ENCODE measurements at regions of chr1 and their contacts with region 1.

Region 1: DNA sequence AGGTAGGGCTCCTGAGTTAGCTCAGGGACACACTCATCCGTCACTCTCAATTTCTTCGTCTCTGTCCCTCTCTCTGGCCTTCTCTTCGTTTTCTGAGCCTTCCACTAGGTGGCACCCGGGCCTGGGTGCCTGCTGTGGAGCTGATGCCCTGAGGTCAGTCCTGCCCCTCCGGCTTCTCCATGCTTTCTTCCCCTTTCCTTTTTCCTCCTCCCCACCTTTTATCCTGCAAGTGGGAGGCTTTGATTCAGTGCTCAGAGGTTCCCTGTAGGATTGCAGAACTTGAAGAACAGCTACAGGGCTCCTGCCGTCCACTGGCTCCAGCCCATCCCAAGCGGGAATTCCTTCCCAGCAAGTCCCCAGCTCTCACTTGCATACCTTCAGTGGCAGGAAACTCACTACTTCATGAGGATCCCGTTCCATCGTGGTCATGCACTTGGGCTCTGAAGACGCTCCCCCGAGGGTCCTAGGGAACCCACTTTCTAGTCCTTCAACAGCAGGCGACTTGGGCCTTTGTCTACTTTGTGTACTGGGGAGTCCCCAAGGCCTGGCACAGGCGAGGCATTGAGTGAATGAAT is 45.6 kb downstream of the SRRM1 start:
- DNase-seq: peak; percentile 72
- ATAC-seq: peak; percentile 87
- H3K4me3 Mint-ChIP-seq: no peak overlapping the region
- H3K27ac Mint-ChIP-seq: no peak overlapping the region
- H3K4me1 Mint-ChIP-seq: no peaks in the 10 kb centered on the region
- H3K27me3 Mint-ChIP-seq: no peaks in the 10 kb centered on the region
- CTCF ChIP-seq: peak; percentile 83

Region 2: DNA sequence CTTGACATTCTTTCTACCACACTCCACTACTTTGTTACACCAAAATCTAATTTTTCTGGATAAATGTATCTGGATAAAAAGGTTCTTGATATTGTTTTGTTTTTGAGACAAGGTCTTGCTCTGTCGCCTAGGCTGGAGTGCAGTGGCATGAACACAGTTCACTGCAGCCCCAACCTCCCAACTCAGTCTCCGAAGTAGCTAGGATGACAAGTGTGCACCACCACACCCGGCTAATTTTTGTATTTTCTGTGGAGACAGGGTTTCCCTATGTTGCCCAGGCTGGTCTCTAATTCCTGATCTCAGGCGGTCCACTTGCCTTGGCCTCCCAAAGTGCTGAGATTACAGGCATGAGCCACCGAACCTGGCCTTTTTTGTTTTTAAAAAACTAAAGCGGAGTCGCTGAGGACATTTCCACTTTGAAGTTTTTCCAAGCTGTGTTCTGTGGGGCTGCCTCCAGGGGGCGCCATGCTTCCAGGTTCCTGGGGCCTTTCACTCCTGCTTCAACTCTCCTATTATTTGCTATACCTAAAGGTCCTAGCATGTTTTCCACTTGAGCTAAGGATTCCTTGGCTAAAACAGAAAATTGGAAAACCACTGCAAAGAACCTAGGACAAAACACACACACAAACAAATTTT is 146.9 kb before region 1 on chr1:
- CTCF ChIA-PET with region 1: no interaction called
- POLR2A ChIA-PET with region 1: no interaction called
- intact Hi-C with region 1: no loop called
- DNase-seq: peak; percentile 45
- ATAC-seq: no peak
- H3K4me3 Mint-ChIP-seq: no peak overlapping the region
- H3K27ac Mint-ChIP-seq: peak overlapping the region; percentile 84
- H3K4me1 Mint-ChIP-seq: peaks cover 60% of the 10 kb centered on the region
- H3K27me3 Mint-ChIP-seq: no peaks in the 10 kb centered on the region
- CTCF ChIP-seq: peak; percentile 83

Region 3: DNA sequence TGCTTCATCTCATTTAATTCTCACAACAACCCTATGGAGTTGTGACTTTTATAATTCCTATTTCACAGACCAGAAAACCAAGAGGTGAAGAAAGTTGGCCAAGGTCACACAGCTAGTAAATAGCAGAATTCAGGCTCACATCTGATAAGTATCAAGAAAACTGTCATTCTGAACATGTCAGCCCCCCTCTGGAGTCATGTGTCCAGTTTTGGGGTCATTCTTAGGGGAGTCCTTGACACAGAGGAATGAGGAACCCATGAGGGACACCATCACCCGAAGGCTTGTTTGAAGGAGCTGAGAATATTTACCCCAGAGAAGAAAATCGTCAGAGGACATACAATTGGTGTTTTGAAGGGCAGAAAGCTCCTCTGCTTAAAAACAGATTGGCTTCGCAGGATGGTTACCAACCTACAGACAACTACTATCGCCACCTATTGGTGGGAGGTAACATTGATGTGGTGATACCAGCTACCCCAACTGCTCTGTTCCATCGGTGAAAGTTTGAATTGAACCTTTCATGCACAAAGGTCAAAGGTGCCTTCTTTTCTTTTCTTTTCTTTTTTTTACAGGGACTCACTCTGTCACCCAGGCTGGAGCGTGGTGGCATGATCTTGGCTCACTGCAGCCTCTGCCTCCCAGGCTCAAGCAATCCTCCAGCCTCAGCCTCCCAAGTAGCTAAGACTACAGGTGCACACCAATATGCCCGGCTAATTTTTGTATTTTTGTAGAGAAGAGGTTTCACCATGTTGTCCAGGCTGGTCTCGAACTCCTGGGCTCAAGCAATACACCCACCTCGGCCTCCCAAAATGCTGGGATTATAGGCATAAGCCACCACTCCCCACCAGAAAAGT is 101.5 kb before region 1 on chr1:
- CTCF ChIA-PET with region 1: no interaction called
- POLR2A ChIA-PET with region 1: no interaction called
- intact Hi-C with region 1: no loop called
- DNase-seq: peak; percentile 70
- ATAC-seq: peak; percentile 98
- H3K4me3 Mint-ChIP-seq: no peak overlapping the region
- H3K27ac Mint-ChIP-seq: peak overlapping the region; percentile 78
- H3K4me1 Mint-ChIP-seq: peaks cover 8% of the 10 kb centered on the region
- H3K27me3 Mint-ChIP-seq: no peaks in the 10 kb centered on the region
- CTCF ChIP-seq: peak; percentile 71

Region 4: GRCh38 chr1:24656046-24656445 is 32.7 kb before region 1 on chr1:
- CTCF ChIA-PET with region 1: interaction called, 15 read pairs
- POLR2A ChIA-PET with region 1: interaction called, 3 read pairs
- intact Hi-C with region 1: no loop called
- DNase-seq: no peak
- ATAC-seq: no peak
- H3K4me3 Mint-ChIP-seq: no peak overlapping the region
- H3K27ac Mint-ChIP-seq: peak overlapping the region; percentile 72
- H3K4me1 Mint-ChIP-seq: peaks cover 52% of the 10 kb centered on the region
- H3K27me3 Mint-ChIP-seq: no peaks in the 10 kb centered on the region
- CTCF ChIP-seq: no peak

Region 5: DNA sequence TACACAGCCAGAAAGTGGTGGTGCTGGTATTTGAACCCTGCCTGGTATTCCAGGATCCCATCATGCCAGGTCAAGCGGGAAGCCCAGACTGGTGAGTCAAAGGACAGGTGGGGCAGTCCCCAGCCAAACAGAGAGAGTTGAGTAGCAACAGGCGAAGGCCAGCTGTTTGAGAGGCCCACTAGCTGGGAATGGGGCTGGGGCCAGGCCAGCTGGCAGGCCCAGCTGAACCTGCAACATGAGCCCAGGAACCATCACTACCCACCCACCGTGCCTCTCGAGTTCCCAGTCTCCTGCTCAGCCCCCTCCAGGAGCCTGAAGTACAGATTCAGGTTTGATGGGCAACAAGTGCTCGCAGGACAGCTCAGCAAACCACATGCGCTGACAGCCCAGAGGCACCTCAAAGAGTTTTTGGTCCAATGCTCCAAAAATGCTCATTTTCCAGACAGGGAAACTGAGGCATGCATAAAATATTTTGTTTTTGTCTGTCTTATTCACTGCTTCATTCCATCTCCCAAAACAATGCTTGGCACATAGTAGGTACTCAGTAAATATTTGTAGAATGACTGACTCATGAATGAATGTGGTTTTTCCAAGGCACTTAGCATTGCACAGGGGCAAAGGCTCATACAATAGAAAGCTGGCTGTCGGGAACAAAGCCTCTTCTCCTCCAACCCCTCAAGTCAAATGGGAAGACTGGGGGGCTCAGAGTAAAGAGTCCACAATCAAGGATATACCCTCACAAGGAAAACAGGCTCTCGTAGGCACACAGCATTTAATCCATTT is 14.0 kb after region 1 on chr1:
- CTCF ChIA-PET with region 1: interaction called, 18 read pairs
- POLR2A ChIA-PET with region 1: no interaction called
- intact Hi-C with region 1: no loop called
- DNase-seq: no peak
- ATAC-seq: no peak
- H3K4me3 Mint-ChIP-seq: no peak overlapping the region
- H3K27ac Mint-ChIP-seq: no peak overlapping the region
- H3K4me1 Mint-ChIP-seq: peaks cover 3% of the 10 kb centered on the region
- H3K27me3 Mint-ChIP-seq: no peaks in the 10 kb centered on the region
- CTCF ChIP-seq: no peak

Region 6: DNA sequence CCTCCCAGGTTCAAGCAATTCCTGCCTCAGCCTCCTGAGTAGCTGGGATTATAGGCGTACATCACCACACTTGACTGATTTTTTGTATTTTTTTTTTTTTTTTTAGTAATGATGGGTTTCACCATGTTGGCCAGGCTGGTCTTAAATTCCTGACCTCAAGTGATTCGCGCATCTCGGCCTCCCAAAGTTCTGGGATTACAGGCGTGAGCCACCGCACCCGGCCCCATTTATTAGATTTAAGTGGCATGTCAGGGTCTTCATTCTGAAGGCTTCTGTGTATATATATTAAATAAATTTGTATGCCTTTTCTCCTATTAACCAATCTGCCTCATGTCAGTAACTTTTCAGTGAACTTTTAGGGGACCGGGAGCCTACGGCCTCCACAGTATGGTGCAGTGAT is 50.5 kb after region 1 on chr1:
- CTCF ChIA-PET with region 1: interaction called, 11 read pairs
- POLR2A ChIA-PET with region 1: no interaction called
- intact Hi-C with region 1: no loop called
- DNase-seq: no peak
- ATAC-seq: no peak
- H3K4me3 Mint-ChIP-seq: no peak overlapping the region
- H3K27ac Mint-ChIP-seq: no peak overlapping the region
- H3K4me1 Mint-ChIP-seq: peaks cover 26% of the 10 kb centered on the region
- H3K27me3 Mint-ChIP-seq: peaks cover 4% of the 10 kb centered on the region
- CTCF ChIP-seq: no peak

Region 7: GRCh38 chr1:24744911-24745710 is 56.4 kb after region 1 on chr1 and contains the start of gene CLIC4:
- CTCF ChIA-PET with region 1: interaction called, 13 read pairs
- POLR2A ChIA-PET with region 1: no interaction called
- intact Hi-C with region 1: no loop called
- DNase-seq: peak; percentile 100
- ATAC-seq: peak; percentile 91
- H3K4me3 Mint-ChIP-seq: peak within 1 kb of the TSS; percentile 87
- H3K27ac Mint-ChIP-seq: peak within 1 kb of the TSS; percentile 77
- H3K4me1 Mint-ChIP-seq: peaks cover 45% of the 10 kb centered on the region
- H3K27me3 Mint-ChIP-seq: no peaks in the 10 kb centered on the region
- CTCF ChIP-seq: no peak
- total RNA-seq, gene CLIC4: 19.7 to 21.8 TPM

Region 8: GRCh38 chr1:24805534-24806301 is 117.0 kb after region 1 on chr1:
- CTCF ChIA-PET with region 1: interaction called, 12 read pairs
- POLR2A ChIA-PET with region 1: no interaction called
- intact Hi-C with region 1: no loop called
- DNase-seq: no peak
- ATAC-seq: no peak
- H3K4me3 Mint-ChIP-seq: no peak overlapping the region
- H3K27ac Mint-ChIP-seq: no peak overlapping the region
- H3K4me1 Mint-ChIP-seq: peaks cover 3% of the 10 kb centered on the region
- H3K27me3 Mint-ChIP-seq: no peaks in the 10 kb centered on the region
- CTCF ChIP-seq: no peak

Region 9: DNA sequence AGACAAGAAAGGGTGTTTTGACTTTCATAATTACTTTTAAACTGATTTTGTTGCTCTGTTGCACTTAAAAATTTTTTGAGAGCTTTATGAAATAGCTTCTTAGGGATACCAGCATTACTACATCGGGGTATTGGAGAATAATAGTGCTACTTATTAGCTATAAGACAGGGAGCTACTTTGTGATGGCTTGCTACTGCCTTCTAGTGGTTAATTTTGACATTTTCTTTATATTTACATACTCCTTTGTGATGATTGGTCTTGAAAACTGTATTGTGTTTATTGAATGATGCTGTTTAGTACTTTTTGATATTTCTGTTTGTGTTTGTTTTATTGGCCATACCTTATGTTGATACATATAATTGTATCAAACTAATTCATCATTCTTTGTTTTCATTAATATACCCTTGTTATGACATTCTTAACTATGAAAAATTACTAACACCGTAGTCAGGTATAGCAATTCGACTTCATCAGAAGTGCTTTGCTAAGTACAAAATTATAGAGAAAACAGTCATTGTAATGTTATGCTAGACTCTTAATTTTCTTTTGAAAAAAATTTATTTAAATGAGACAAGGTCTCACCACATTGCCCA is 142.1 kb after region 1 on chr1:
- CTCF ChIA-PET with region 1: interaction called, 261 read pairs
- POLR2A ChIA-PET with region 1: no interaction called
- intact Hi-C with region 1: loop called (anchors 2 kb)
- DNase-seq: no peak
- ATAC-seq: no peak
- H3K4me3 Mint-ChIP-seq: no peak overlapping the region
- H3K27ac Mint-ChIP-seq: no peak overlapping the region
- H3K4me1 Mint-ChIP-seq: no peaks in the 10 kb centered on the region
- H3K27me3 Mint-ChIP-seq: peaks cover 2% of the 10 kb centered on the region
- CTCF ChIP-seq: peak; percentile 96

Measured in activated CD8-positive, alpha-beta T cell treated with anti-CD3 and anti-CD28 coated beads for 36 hours (primary cell).